Naive thymus-derived CD4-positive, alpha-beta T cell (primary cell): ENCODE measurements at regions of chrX and their contacts with region 1.

Region 1: DNA sequence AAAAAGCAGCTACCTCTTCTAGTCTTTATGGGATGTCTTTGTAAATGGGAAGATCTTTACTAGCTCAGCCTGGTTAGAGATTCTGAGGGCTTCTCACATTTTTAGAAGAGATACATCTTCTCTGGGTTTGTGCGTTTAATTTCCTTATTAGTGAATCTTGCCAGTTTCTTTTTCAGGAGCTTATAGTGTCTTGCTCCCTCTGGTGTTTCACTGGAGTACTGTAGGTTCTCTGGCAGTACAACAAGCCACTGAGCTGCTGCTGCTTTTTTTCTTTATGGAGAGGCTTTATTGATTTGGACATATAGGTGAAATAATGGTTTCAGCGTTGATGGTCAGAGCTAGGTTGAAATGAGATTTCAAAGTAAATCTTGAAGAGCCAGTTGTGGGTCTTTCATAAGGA is 82.9 kb downstream of the LAS1L start:
- DNase-seq: peak in 6 of 9 donors; percentile 4 to 40 (median 35)
- ATAC-seq: no peak
- H3K4me3 ChIP-seq: no peak overlapping the region
- H3K4me3 Mint-ChIP-seq: no peak overlapping the region
- H3K27ac ChIP-seq: no peak overlapping the region
- H3K27ac Mint-ChIP-seq: peak overlapping the region in 2 of 9 donors; percentile 18 to 44
- H3K4me1 ChIP-seq: no peaks in the 10 kb centered on the region
- H3K4me1 Mint-ChIP-seq: peaks cover 0 to 8% (median 3%) of the 10 kb centered on the region in 7 donors
- H3K27me3 ChIP-seq: no peaks in the 10 kb centered on the region
- H3K27me3 Mint-ChIP-seq: no peaks in the 10 kb centered on the region

Region 2: GRCh38 chrX:64093761-64094160 is 1357.9 kb before region 1 on chrX:
- CTCF ChIA-PET with region 1: no interaction called
- POLR2A ChIA-PET with region 1: no interaction called
- intact Hi-C with region 1: loop called in 1 of 2 experiments (anchors 5 kb)
- DNase-seq: peak in 1 of 9 donors; percentile 0
- ATAC-seq: no peak
- H3K4me3 ChIP-seq: no peak overlapping the region
- H3K4me3 Mint-ChIP-seq: no peak overlapping the region
- H3K27ac ChIP-seq: no peak overlapping the region
- H3K27ac Mint-ChIP-seq: no peak overlapping the region
- H3K4me1 ChIP-seq: no peaks in the 10 kb centered on the region
- H3K4me1 Mint-ChIP-seq: no peaks in the 10 kb centered on the region
- H3K27me3 ChIP-seq: no peaks in the 10 kb centered on the region
- H3K27me3 Mint-ChIP-seq: no peaks in the 10 kb centered on the region

Region 3: GRCh38 chrX:65841263-65841662 is 389.6 kb after region 1 on chrX:
- CTCF ChIA-PET with region 1: no interaction called
- POLR2A ChIA-PET with region 1: no interaction called
- intact Hi-C with region 1: no loop called
- DNase-seq: no peak
- ATAC-seq: no peak
- H3K4me3 ChIP-seq: no peak overlapping the region
- H3K4me3 Mint-ChIP-seq: no peak overlapping the region
- H3K27ac ChIP-seq: no peak overlapping the region
- H3K27ac Mint-ChIP-seq: no peak overlapping the region
- H3K4me1 ChIP-seq: no peaks in the 10 kb centered on the region
- H3K4me1 Mint-ChIP-seq: peaks cover 7 to 13% (median 12%) of the 10 kb centered on the region in 7 donors
- H3K27me3 ChIP-seq: no peaks in the 10 kb centered on the region
- H3K27me3 Mint-ChIP-seq: no peaks in the 10 kb centered on the region